Ascending aorta (tissue), 2 donors: ENCODE measurements at regions of chr14 and their contacts with region 1.

Region 1: DNA sequence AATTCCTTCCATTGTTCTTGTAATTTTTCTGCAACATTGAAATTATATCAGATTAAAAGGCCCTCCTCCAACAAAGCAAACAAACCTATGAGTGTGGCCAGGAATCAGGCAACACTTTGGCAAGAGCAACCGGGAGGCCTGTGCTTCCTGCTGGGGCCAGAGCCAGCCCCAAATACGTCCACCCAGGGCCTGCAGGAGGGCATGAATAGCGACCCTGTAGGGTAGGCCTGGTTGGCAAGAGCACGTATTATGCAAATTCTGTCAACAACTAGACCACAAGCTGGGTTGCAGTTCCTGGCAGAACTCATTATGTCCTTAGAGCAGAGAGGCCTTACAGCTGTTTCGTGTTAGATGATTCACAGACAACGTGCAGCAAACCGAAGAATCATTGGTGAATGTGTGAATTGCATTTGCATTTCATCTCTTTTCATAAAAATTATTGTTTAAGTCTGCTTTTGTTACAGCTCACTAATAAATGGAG is 26.9 kb upstream of the LGALS3 start:
- DNase-seq: peak; percentile 53 to 86
- H3K4me3 ChIP-seq: no peak overlapping the region
- H3K27ac ChIP-seq: peak overlapping the region; percentile 73 to 84
- H3K4me1 ChIP-seq: peaks cover 18 to 30% of the 10 kb centered on the region in 2 donors
- H3K27me3 ChIP-seq: no peaks in the 10 kb centered on the region
- CTCF ChIP-seq: no peak

Region 2: DNA sequence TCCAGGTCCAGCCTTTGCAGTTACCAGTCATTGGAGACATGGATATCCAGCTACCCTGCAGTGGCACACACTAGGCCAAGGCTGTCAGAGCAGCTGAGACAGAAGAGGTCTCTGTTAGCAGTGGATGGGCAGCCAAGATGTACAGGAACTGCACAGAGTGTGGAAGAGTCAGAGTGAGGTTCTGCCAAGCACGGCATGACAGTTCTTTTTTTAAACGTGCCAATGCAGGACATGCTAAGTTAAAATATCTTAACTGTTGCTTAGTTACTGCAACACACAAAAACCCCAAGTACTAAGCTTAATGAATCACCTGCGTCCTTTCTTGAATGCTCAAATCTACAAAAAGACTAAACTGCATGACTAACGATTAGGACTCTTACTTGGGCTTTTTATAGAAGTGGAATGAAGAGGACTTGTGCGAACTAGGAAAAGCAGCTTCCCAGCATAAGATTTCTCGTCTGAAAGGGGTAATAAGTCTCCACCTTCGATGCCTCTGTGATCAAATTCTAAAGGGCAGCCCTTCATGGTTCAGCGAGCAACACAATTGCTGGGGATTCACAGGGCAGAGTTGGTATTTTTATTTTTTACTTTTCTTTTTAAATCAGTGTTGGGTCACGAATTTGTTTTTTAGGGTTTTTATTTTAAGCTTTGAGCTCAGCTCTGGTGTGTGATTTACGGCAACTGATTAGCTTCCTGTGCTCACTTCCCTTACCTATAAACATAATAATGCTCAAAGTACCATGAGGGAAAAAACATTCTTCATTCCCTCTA is 30.1 kb before region 1 on chr14:
- intact Hi-C with region 1: loop called (anchors 2 kb)
- DNase-seq: peak in 1 of 2 donors; percentile 83
- H3K4me3 ChIP-seq: peak overlapping the region in 1 of 2 donors; percentile 45
- H3K27ac ChIP-seq: peak overlapping the region; percentile 84 to 90
- H3K4me1 ChIP-seq: peaks cover 0 to 21% of the 10 kb centered on the region in 2 donors
- H3K27me3 ChIP-seq: no peaks in the 10 kb centered on the region
- CTCF ChIP-seq: no peak

Region 3: GRCh38 chr14:55136885-55137786 is 35.0 kb after region 1 on chr14:
- intact Hi-C with region 1: loop called (anchors 2 kb)
- DNase-seq: peak; percentile 20 to 90
- H3K4me3 ChIP-seq: peak overlapping the region; percentile 27 to 54
- H3K27ac ChIP-seq: peak overlapping the region; percentile 61 to 77
- H3K4me1 ChIP-seq: peaks cover 8 to 47% of the 10 kb centered on the region in 2 donors
- H3K27me3 ChIP-seq: no peaks in the 10 kb centered on the region
- CTCF ChIP-seq: no peak